Vagina (tissue), 2 donors: ENCODE measurements at regions of chr22 and their contacts with region 1.

Region 1: DNA sequence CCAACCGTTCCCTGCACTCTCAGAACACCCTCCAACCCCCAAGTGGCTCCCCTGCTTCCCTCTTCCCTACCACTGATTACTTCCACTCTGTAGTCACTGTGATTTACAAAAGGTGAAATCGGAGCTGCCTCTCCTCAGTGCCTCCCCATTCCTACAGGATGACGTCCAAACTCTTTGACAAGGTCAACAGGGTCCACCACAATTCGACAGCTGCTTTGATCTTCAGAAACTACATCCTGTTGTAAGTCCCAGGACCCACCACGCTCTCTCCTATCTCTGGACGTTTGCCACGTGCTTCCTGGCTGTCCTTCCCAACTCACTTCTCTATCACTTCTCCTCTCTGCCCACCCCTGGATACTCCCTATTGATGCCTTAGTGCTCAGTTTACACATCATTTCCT is 85.0 kb upstream of the EIF3D start:
- DNase-seq: no peak
- H3K4me3 ChIP-seq: no peak overlapping the region
- H3K27ac ChIP-seq: no peak overlapping the region
- H3K4me1 ChIP-seq: no peaks in the 10 kb centered on the region
- H3K27me3 ChIP-seq: no peaks in the 10 kb centered on the region
- CTCF ChIP-seq: no peak
- POLR2A ChIP-seq: no peak

Region 2: GRCh38 chr22:36565686-36566085 is 48.3 kb before region 1 on chr22:
- intact Hi-C with region 1: loop called (anchors 2 kb)
- DNase-seq: no peak
- H3K4me3 ChIP-seq: no peak overlapping the region
- H3K27ac ChIP-seq: no peak overlapping the region
- H3K4me1 ChIP-seq: no peaks in the 10 kb centered on the region
- H3K27me3 ChIP-seq: no peaks in the 10 kb centered on the region
- CTCF ChIP-seq: no peak
- POLR2A ChIP-seq: no peak

Region 3: DNA sequence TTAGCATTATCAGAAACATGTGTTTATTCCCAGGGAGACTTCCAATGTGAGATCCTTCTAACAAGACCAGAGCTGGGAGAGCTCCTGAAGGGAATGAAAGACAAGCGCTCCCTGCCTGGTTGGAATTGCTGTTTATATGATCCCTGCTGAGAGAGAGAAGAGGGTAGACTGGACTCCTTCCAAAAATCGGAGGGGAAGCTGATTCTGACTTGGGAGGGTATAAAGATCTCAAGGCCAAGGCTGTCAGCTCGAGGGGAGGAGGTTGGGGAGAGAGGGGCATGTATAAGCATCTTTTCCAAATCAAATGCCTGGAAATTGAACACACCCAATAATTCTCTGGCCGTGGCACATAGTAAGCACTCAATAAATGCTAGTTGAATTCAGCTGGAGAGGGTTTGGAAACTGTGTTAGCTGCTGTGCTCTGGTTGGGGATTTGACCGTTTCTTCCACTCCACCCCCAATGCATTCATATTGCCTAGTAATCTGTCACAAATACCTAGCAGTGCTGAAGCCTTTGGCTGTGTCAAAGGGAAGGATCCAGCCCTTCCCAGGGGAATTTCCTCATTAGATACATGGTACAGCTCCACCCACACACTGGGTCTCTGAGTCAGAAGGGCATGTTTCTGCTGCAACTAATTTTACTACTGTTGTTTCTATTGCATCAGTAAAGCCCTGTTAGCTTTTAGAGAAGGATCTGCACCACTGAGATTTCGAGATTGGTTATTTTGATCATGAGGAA is 28.1 kb after region 1 on chr22:
- intact Hi-C with region 1: no loop called
- DNase-seq: no peak
- H3K4me3 ChIP-seq: no peak overlapping the region
- H3K27ac ChIP-seq: no peak overlapping the region
- H3K4me1 ChIP-seq: no peaks in the 10 kb centered on the region
- H3K27me3 ChIP-seq: no peaks in the 10 kb centered on the region
- CTCF ChIP-seq: no peak
- POLR2A ChIP-seq: no peak

Region 4: GRCh38 chr22:36734171-36735058 is 120.5 kb after region 1 on chr22:
- intact Hi-C with region 1: no loop called
- DNase-seq: peak; percentile 32 to 92
- H3K4me3 ChIP-seq: no peak overlapping the region
- H3K27ac ChIP-seq: no peak overlapping the region
- H3K4me1 ChIP-seq: no peaks in the 10 kb centered on the region
- H3K27me3 ChIP-seq: no peaks in the 10 kb centered on the region
- CTCF ChIP-seq: no peak
- POLR2A ChIP-seq: no peak